Tibial artery (tissue), 4 donors: ENCODE measurements at regions of chr9 and their contacts with region 1.

Region 1: DNA sequence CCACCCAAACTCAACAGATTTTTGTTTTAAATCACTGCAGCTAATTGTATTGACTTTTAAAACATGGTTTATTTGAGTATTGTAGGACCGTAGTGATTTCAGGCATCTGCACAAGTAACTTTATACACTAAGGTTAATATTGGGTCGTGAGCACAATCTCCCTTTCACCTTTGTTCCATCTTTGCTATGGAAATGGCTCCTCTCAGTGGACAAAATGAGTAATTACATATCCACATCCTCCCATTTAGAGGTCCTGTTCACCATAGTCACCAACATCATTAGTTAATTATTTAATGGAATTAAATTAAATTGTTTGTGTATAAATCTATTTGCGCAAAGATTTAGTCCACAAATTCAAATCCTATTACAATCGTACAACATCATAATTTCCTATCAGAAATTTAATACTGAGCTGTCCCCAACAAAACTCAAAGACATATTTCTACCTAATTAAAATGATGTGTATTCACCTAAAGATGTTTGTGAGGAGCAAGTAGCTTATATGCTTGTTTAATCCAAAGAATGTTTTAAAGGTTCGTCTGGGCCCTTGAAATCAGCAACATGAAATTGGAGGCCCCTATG is 173.0 kb upstream of the DAPK1 start:
- DNase-seq: no peak
- H3K4me3 ChIP-seq: no peak overlapping the region
- H3K27ac ChIP-seq: no peak overlapping the region
- H3K4me1 ChIP-seq: peaks cover 0 to 22% (median 2%) of the 10 kb centered on the region in 4 donors
- H3K27me3 ChIP-seq: peaks cover 0 to 3% of the 10 kb centered on the region in 2 donors
- CTCF ChIP-seq: peak; percentile 76 to 87

Region 2: GRCh38 chr9:86434039-86434726 is 890.5 kb before region 1 on chr9:
- intact Hi-C with region 1: loop called (anchors 10 kb)
- DNase-seq: peak; percentile 59 to 64
- H3K4me3 ChIP-seq: no peak overlapping the region
- H3K27ac ChIP-seq: no peak overlapping the region
- H3K4me1 ChIP-seq: no peaks in the 10 kb centered on the region
- H3K27me3 ChIP-seq: no peaks in the 10 kb centered on the region
- CTCF ChIP-seq: peak; percentile 59 to 75

Region 3: GRCh38 chr9:86485359-86485758 is 839.3 kb before region 1 on chr9:
- intact Hi-C with region 1: loop called (anchors 2 kb)
- DNase-seq: no peak
- H3K4me3 ChIP-seq: no peak overlapping the region
- H3K27ac ChIP-seq: no peak overlapping the region
- H3K4me1 ChIP-seq: no peaks in the 10 kb centered on the region
- H3K27me3 ChIP-seq: no peaks in the 10 kb centered on the region
- CTCF ChIP-seq: no peak

Region 4: DNA sequence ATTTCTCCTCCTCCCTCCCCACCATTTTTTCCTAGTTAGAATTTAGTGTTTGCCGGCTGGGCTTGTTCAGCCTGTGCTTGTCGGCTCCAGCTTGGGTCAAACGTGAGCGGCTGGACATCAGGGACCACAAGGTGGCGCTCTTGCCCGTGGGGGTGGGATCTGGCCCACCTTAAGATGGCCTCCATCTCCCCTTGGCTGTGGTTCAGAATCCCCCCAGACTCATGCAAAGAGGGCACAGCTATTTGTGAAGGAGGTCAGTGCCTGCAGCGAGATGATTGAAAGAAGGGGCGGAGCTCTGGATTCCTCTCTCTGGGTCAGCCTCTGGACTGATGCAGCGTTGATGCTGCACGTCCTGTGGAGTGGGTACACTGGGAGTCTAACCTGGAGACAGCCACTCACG is 687.2 kb before region 1 on chr9:
- intact Hi-C with region 1: loop called (anchors 10 kb)
- DNase-seq: no peak
- H3K4me3 ChIP-seq: no peak overlapping the region
- H3K27ac ChIP-seq: no peak overlapping the region
- H3K4me1 ChIP-seq: no peaks in the 10 kb centered on the region
- H3K27me3 ChIP-seq: peaks cover 0 to 14% of the 10 kb centered on the region in 2 donors
- CTCF ChIP-seq: peak; percentile 23 to 27

Region 5: DNA sequence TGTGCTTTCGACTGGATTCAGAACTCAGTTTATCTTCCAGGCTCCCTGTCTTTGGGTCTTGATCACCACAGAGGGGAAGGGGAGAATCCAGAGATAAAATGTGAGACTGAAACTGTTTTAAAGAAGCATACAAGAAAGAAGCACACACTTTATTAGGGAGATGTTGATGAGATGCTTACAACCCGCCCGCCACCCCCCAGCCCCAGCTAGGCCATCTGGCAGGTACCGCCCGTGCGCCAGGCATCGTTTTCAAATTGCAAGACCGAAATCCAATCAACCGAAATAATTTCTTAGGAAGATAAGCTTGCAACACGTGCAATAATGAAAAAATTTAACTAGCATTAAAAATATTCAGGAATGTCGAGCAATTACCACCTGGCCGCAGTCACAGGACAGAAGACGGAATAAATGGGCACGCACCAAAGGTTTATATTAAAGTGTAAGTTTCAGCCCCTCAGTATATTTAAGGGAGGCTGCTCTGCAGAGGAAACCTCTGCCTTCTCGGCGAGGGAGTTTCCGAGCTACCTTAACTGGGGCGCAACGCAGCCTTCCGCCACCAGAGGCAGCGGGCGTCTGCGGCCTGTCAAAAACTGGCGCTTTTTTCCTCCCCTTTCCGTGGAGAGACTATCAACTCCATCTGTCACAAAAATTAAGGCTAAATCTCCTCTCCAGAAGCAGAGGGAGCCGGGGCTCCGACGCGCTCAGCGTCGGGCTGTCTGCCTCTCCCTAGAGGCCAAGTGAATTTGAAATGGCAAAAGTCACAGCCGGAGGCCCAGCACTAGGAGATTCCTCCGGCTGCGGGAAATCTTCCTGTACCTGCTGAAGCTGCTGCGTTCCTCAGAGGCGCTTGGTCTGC is 376.4 kb before region 1 on chr9:
- intact Hi-C with region 1: loop called (anchors 5 kb)
- DNase-seq: peak; percentile 78 to 89
- H3K4me3 ChIP-seq: peak overlapping the region; percentile 66 to 83
- H3K27ac ChIP-seq: peak overlapping the region; percentile 79 to 90
- H3K4me1 ChIP-seq: peaks cover 0 to 32% (median 4%) of the 10 kb centered on the region in 4 donors
- H3K27me3 ChIP-seq: no peaks in the 10 kb centered on the region
- CTCF ChIP-seq: peak; percentile 90 to 96